CD14-positive monocyte (primary cell): ENCODE measurements at regions of chr20 and their contacts with region 1.

Region 1: DNA sequence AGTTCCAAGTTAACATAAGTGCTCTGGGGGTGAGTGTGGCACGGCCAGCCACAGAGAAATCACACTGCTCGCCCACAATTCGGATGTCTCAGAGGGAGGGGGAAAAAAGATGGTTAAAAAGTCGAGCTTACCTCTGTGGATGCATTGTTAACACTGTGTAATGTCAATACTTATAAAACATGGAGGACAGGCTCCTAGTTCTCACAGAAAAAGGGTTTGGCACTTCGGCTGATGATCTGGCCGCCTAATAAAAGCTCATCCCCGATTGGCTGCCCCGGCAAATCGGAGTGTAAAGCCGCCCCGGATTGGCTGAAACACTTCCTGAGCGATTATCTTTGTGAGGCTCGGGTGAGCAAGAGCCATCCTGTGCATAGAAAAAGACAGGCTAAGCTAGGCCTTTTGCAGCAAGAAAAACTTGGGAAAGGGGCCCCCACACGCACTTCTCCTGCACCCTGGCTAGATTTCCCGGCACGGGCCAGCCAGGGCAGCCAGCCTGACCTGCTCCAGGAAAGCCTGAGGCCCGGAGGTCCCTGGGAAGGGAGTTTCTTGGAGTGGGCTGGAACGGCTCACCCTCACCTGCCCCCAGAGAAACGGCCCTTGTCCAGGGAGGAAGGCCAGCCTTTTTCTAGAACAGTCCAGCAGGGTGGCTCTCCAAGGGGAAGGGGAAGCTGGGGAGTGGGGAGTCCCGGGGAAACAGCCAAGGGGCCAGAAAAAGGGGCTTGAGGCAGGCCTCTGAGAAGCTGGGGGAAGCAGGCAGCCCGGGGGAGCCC is at the start of gene ZMYND8:
- DNase-seq: peak; percentile 88 to 91 (median 90)
- H3K4me3 ChIP-seq: peak within 1 kb of the TSS; percentile 14 to 71 (median 30)
- H3K4me3 Mint-ChIP-seq: peak within 1 kb of the TSS; percentile 69 to 95
- H3K27ac ChIP-seq: peak within 1 kb of the TSS; percentile 91 to 96
- H3K27ac Mint-ChIP-seq: peak within 1 kb of the TSS; percentile 94 to 98 (median 97)
- H3K4me1 ChIP-seq: peaks cover 98% of the 10 kb centered on the region in 2 donors
- H3K4me1 Mint-ChIP-seq: peaks cover 59% of the 10 kb centered on the region
- H3K27me3 ChIP-seq: no peaks in the 10 kb centered on the region
- H3K27me3 Mint-ChIP-seq: no peaks in the 10 kb centered on the region
- CTCF ChIP-seq: no peak
- polyA plus RNA-seq, gene ZMYND8: 1.4 to 13.8 (median 5.8) TPM

Region 2: DNA sequence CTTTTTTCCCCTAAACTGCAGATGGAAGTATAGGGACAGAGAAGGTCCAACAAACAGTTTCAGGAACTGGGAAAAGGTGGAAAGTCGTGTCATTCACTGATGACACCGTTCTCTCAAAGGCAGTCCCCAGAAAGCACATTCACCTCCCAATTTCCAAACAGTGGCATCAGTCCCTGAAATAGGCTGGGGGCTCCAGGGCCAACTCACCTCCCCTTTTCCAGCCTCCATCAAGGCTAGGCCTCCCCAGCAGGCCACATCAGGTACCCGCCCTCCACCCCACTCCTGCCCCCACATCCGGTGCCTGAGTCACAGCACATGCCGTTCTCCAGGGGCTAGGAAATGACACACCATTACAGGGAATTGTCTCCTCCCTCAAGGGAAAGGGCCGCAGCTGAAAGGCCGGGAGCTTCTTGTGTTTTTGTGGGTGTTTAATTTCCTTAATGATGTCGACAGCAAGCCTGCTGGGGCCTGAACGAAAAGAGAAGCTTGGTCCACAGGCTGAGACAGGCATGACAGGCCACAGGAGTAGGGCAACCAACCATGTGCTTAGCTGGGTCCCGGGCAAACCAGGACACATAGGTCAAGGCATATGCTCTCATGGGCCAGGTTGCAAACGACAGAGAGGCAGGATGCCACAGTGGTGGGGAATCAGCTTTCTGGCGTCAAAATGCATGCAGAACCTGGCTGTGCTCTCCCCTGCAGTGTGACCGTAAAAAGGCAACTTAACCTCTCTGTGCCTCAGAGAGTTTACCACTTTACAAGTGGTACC is 39.4 kb before region 1 on chr20:
- intact Hi-C with region 1: loop called in 1 of 2 experiments (anchors 5 kb)
- DNase-seq: peak; percentile 70 to 85 (median 80)
- H3K4me3 ChIP-seq: peak overlapping the region in 1 of 3 experiments; percentile 55
- H3K4me3 Mint-ChIP-seq: peak overlapping the region in 1 of 2 donors; percentile 37
- H3K27ac ChIP-seq: peak overlapping the region; percentile 77 to 85
- H3K27ac Mint-ChIP-seq: peak overlapping the region; percentile 85 to 96 (median 94)
- H3K4me1 ChIP-seq: peaks cover 45 to 57% of the 10 kb centered on the region in 2 donors
- H3K4me1 Mint-ChIP-seq: peaks cover 59% of the 10 kb centered on the region
- H3K27me3 ChIP-seq: no peaks in the 10 kb centered on the region
- H3K27me3 Mint-ChIP-seq: no peaks in the 10 kb centered on the region
- CTCF ChIP-seq: no peak

Region 3: DNA sequence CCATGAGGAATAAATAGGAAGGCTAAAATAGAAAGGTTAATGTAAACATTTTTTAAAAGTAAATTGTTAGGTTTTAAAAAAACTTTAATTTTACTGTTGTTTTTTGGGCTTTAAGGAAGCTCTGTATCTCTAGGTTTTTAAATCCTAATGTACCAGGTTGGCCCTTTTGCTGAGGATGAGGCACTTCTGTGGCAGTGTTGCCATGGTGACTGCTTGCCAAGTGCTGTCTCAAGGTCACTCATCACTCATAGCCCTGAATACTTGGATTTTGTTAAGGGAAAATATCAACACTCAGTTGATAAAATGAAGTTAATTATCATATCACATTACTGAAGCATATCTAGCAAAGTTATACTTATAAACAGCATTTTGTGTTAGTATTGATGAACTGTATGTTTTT is 195.1 kb after region 1 on chr20:
- intact Hi-C with region 1: no loop called
- DNase-seq: no peak
- H3K4me3 ChIP-seq: no peak overlapping the region
- H3K4me3 Mint-ChIP-seq: no peak overlapping the region
- H3K27ac ChIP-seq: no peak overlapping the region
- H3K27ac Mint-ChIP-seq: no peak overlapping the region
- H3K4me1 ChIP-seq: no peaks in the 10 kb centered on the region
- H3K4me1 Mint-ChIP-seq: no peaks in the 10 kb centered on the region
- H3K27me3 ChIP-seq: no peaks in the 10 kb centered on the region
- H3K27me3 Mint-ChIP-seq: peaks cover 0 to 1% (median 0%) of the 10 kb centered on the region in 3 donors
- CTCF ChIP-seq: no peak

Region 4: DNA sequence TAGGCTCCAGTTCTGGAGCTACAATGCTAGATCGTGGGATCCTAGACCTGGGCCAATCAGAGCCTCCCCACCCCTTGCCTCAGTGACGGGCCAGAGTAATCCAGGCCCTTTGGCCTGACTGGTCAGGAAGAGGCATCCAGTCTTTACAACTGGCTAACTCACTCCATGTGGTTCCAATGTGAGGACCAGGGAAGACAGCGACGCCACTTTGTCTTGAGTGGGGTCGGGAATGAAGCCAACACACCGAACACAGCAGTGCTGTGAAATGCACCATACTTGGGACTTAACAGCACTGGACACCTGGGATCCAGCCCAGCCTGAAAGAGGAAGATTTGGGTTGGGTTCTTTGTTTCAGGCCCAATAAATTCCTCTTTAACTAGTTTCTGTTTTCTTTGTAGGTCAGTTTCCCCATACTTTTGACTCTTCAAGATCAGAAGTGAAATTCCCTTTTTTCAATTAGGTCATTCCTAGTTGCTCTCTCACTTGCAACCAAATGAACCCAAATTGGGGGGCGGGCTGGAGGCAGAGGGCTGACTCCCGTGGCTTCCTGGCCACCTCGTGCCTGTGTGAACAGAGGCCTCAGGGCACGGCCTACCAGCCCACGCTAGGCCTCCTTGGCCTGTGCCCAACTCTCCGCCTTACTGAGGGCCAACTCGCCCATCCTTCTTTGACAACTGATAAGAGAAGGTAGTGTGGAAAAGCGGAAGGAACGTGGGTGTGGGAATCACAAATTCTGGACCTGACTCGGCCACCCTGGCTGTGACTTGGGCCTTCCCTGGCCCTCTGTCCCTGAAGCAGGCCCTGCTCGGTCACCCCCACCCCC is 411.5 kb after region 1 on chr20:
- intact Hi-C with region 1: loop called in 1 of 2 experiments (anchors 10 kb)
- DNase-seq: peak; percentile 72 to 85 (median 77)
- H3K4me3 ChIP-seq: peak overlapping the region in 1 of 3 experiments; percentile 35
- H3K4me3 Mint-ChIP-seq: peak overlapping the region in 1 of 2 donors; percentile 48
- H3K27ac ChIP-seq: peak overlapping the region; percentile 88
- H3K27ac Mint-ChIP-seq: peak overlapping the region; percentile 93 to 97 (median 95)
- H3K4me1 ChIP-seq: peaks cover 98 to 100% of the 10 kb centered on the region in 2 donors
- H3K4me1 Mint-ChIP-seq: peaks cover 99% of the 10 kb centered on the region
- H3K27me3 ChIP-seq: no peaks in the 10 kb centered on the region
- H3K27me3 Mint-ChIP-seq: peaks cover 0 to 10% (median 0%) of the 10 kb centered on the region in 3 donors
- CTCF ChIP-seq: no peak

Region 5: GRCh38 chr20:48769069-48769879 is 1412.6 kb after region 1 on chr20:
- intact Hi-C with region 1: loop called in 1 of 2 experiments (anchors 5 kb)
- DNase-seq: peak; percentile 88 to 95 (median 92)
- H3K4me3 ChIP-seq: no peak overlapping the region
- H3K4me3 Mint-ChIP-seq: peak overlapping the region in 1 of 2 donors; percentile 47
- H3K27ac ChIP-seq: peak overlapping the region; percentile 37 to 94
- H3K27ac Mint-ChIP-seq: peak overlapping the region; percentile 71 to 99 (median 85)
- H3K4me1 ChIP-seq: peaks cover 93 to 99% of the 10 kb centered on the region in 2 donors
- H3K4me1 Mint-ChIP-seq: peaks cover 99% of the 10 kb centered on the region
- H3K27me3 ChIP-seq: no peaks in the 10 kb centered on the region
- H3K27me3 Mint-ChIP-seq: no peaks in the 10 kb centered on the region
- CTCF ChIP-seq: no peak